ENCODE measurements at regions of chr2 and their contacts with region 1.

Region 1: GRCh38 chr2:74334931-74335333 is 8.3 kb downstream of the SLC4A5 start:
- DNase-seq: peak; percentile 72 to 81
- ATAC-seq: peak; percentile 90 to 96
- H3K4me3 ChIP-seq: no peak overlapping the region
- H3K27ac ChIP-seq: no peak overlapping the region
- H3K4me1 ChIP-seq: no peaks in the 10 kb centered on the region
- CTCF ChIP-seq: peak; percentile 90
- EP300 ChIP-seq: no peak
- POLR2A ChIP-seq: no peak
- RAD21 ChIP-seq: peak; percentile 72 to 83

Region 2: GRCh38 chr2:74221604-74222299 is 113.2 kb before region 1 on chr2:
- CTCF ChIA-PET with region 1: no interaction called
- POLR2A ChIA-PET with region 1: no interaction called
- DNase-seq: no peak
- ATAC-seq: peak; percentile 6 to 13; a peak in 2 of 6 replicates
- H3K4me3 ChIP-seq: no peak overlapping the region
- H3K27ac ChIP-seq: no peak overlapping the region
- H3K4me1 ChIP-seq: no peaks in the 10 kb centered on the region
- CTCF ChIP-seq: no peak
- EP300 ChIP-seq: no peak
- POLR2A ChIP-seq: no peak
- RAD21 ChIP-seq: no peak

Region 3: DNA sequence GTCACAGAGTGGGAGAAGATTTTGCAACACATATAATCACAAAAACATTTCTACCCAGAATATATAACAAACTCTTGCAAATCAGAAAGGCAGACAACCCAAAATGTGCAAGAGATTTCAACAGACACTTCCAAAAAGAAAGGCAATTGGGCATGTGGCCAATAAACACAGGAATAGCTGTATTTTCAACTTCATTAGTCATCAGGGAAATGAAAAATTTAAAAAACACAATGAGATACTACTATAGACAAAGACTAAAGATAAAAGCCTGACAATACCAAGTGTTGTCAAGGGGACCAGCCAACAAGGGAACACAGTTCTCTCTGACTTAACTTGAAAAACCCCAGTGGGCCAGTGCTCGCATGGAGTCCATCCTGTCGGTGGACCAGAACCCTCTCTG is 96.1 kb before region 1 on chr2:
- CTCF ChIA-PET with region 1: interaction called, 13 read pairs
- POLR2A ChIA-PET with region 1: no interaction called
- DNase-seq: no peak
- ATAC-seq: no peak
- H3K4me3 ChIP-seq: no peak overlapping the region
- H3K27ac ChIP-seq: no peak overlapping the region
- H3K4me1 ChIP-seq: no peaks in the 10 kb centered on the region
- CTCF ChIP-seq: no peak
- EP300 ChIP-seq: no peak
- POLR2A ChIP-seq: no peak
- RAD21 ChIP-seq: no peak

Region 4: DNA sequence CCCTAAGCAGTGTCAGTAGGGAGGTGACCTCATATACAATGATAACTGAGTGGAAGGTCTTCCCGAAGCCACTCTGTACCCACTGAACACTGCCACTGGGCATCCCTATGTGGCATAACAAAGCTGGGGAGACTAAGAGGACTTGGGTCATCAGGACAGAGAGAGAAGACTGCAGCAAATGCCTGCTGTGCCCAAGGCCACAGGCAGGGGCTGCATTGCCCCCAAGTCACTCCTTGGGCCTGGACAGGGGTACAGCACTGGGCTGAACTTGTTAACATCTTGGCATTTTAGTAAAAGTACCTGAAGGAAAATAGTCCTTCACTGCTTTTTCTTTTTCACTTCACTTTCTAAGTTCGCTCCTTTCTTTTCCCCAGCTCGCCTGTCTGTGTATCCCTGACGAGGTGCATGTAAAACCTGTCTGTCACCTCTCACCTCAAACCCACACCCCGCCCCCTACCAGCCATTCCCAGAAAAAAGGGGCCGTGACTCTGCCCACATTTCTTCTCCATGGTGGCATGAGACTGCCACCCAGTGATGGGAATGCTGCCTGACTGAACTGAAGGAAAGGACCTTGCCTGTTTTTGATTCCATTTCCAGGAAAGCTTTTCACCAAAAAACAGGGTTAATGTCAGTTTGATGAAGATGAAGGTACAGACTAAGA is 73.6 kb before region 1 on chr2:
- CTCF ChIA-PET with region 1: interaction called, 12 read pairs
- POLR2A ChIA-PET with region 1: no interaction called
- DNase-seq: peak; percentile 50 to 52
- ATAC-seq: peak; percentile 79 to 88
- H3K4me3 ChIP-seq: no peak overlapping the region
- H3K27ac ChIP-seq: no peak overlapping the region
- H3K4me1 ChIP-seq: no peaks in the 10 kb centered on the region
- CTCF ChIP-seq: peak; percentile 64
- EP300 ChIP-seq: no peak
- POLR2A ChIP-seq: no peak
- RAD21 ChIP-seq: peak; percentile 64 to 80

Region 5: GRCh38 chr2:74281141-74281975 is 53.6 kb before region 1 on chr2:
- CTCF ChIA-PET with region 1: interaction called, 19 read pairs
- POLR2A ChIA-PET with region 1: no interaction called
- DNase-seq: no peak
- ATAC-seq: no peak
- H3K4me3 ChIP-seq: no peak overlapping the region
- H3K27ac ChIP-seq: no peak overlapping the region
- H3K4me1 ChIP-seq: no peaks in the 10 kb centered on the region
- CTCF ChIP-seq: no peak
- EP300 ChIP-seq: no peak
- POLR2A ChIP-seq: no peak
- RAD21 ChIP-seq: no peak

Region 6: GRCh38 chr2:74316627-74317295 is 18.2 kb before region 1 on chr2:
- CTCF ChIA-PET with region 1: interaction called, 105 read pairs
- POLR2A ChIA-PET with region 1: no interaction called
- DNase-seq: no peak
- ATAC-seq: no peak; a peak in 1 of 6 replicates
- H3K4me3 ChIP-seq: no peak overlapping the region
- H3K27ac ChIP-seq: no peak overlapping the region
- H3K4me1 ChIP-seq: no peaks in the 10 kb centered on the region
- CTCF ChIP-seq: no peak
- EP300 ChIP-seq: no peak
- POLR2A ChIP-seq: no peak
- RAD21 ChIP-seq: no peak

Region 7: DNA sequence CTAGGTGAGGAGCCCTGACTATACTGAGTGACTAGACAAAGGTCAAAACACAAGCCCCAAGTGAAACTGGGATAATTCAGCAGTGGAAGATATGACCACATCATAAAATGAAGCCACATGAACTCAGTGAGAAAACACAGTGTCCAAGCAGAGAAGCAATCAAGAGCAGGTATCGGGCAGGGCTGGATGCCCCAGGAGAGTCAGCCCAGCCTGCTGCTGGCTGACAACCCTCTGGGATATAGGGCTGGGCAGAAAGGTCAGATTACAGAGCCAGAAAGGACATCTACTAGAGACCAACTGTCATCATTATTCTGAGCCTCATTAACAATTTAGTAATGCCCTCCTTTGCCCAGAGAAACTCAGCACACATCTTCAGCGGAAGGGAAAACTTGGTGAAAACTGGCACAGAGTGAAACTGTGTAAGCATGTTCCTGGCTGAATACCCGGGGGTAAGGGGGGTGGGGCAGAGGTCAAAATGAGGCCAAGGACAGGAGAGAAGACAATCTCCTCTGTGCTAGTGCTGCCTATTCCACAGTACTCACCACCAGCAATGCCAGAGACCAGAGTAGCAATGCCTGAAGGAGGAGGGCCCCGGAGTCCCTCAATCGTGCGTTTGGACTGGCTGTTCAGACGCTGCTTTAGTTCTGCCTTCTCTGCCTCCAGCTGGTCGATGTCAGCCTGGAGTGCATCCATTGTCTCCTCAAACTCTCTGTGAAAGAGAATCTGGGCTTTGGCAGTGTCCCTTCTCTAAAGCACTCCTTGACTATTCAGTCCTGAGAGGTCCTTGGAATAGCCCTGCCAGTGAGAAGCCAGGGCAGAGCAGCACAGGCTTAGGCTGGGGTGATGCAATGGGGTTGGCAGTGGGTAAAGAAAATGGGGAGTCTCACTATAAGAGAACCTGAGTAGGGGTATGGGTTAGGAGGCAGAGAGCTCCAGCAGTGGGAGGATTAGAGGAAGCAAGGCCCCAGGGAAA is 29.9 kb after region 1 on chr2:
- CTCF ChIA-PET with region 1: interaction called, 30 read pairs
- POLR2A ChIA-PET with region 1: no interaction called
- DNase-seq: no peak
- ATAC-seq: no peak; a peak in 1 of 6 replicates
- H3K4me3 ChIP-seq: no peak overlapping the region
- H3K27ac ChIP-seq: no peak overlapping the region
- H3K4me1 ChIP-seq: no peaks in the 10 kb centered on the region
- CTCF ChIP-seq: no peak
- EP300 ChIP-seq: no peak
- POLR2A ChIP-seq: no peak
- RAD21 ChIP-seq: no peak